ENCODE measurements at regions of chr11 and their contacts with region 1.

Region 1: GRCh38 chr11:64000026-64000739 is 13.9 kb downstream of the OTUB1 start:
- DNase-seq: no peak
- H3K4me3 ChIP-seq: peak overlapping the region; percentile 32; the same call in 1 of the 2 replicates
- H3K27ac ChIP-seq: no peak overlapping the region
- H3K27me3 ChIP-seq: no peaks in the 10 kb centered on the region
- CTCF ChIP-seq: peak; percentile 58

Region 2: GRCh38 chr11:64146036-64146962 is 146.1 kb after region 1 on chr11:
- CTCF ChIA-PET with region 1: interaction called, 154 read pairs
- POLR2A ChIA-PET with region 1: interaction called, 3 read pairs
- DNase-seq: no peak
- H3K4me3 ChIP-seq: no peak overlapping the region
- H3K27ac ChIP-seq: no peak overlapping the region
- H3K27me3 ChIP-seq: peaks cover 2% of the 10 kb centered on the region
- CTCF ChIP-seq: peak; percentile 78

Region 3: DNA sequence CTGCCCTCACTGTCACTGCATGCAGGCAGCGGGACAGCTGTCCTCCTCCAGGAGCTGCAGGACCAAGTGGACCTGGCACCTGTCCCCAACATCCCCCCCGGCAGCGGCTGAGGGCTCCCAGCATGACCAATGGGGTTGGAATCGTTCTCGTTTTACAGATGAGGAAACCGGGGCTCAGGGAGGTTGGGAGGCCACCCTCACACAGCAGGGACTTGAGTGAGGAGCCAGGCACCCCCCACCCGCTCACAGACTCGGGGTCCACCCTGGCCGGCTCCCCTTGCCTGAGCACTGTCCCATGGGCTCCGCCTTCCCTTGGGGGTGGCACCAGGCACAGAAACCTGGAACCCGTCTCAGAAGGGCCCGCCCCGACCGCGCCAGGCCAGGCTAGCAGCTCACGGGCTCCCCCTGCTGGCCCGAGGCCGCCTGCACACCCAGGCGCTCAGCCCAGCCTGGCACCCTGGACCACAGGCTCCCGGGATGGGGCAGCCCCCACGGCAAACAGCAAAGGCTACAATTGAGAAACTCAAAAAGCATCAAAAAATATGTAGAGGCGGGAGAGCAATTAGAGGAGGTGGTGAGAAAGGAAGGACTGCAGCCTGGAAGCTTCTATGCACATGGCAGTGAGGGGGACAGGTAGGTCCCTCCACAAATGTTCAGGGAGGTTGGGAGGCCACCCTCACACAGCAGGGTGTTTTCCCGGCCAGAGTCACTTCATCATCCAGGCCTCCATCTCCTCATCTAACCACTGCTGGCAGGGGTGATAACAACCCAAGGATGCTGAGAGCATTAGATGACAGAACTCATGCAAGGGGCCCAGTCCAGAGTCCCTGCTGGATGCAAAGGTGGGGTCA is 152.9 kb after region 1 on chr11:
- CTCF ChIA-PET with region 1: interaction called, 154 read pairs
- POLR2A ChIA-PET with region 1: interaction called, 3 read pairs
- DNase-seq: no peak
- H3K4me3 ChIP-seq: no peak overlapping the region
- H3K27ac ChIP-seq: no peak overlapping the region
- H3K27me3 ChIP-seq: no peaks in the 10 kb centered on the region
- CTCF ChIP-seq: peak; percentile 97

Measured in AG04450 (cell line).